Aorta (tissue), 5 donors: ENCODE measurements at regions of chr18 and their contacts with region 1.

Region 1: GRCh38 chr18:30532379-30532778 is 510.2 kb downstream of the DSC3 start:
- DNase-seq: no peak
- ATAC-seq: no peak
- H3K4me3 ChIP-seq: no peak overlapping the region
- H3K27ac ChIP-seq: no peak overlapping the region
- H3K4me1 ChIP-seq: no peaks in the 10 kb centered on the region
- H3K27me3 ChIP-seq: no peaks in the 10 kb centered on the region

Region 2: DNA sequence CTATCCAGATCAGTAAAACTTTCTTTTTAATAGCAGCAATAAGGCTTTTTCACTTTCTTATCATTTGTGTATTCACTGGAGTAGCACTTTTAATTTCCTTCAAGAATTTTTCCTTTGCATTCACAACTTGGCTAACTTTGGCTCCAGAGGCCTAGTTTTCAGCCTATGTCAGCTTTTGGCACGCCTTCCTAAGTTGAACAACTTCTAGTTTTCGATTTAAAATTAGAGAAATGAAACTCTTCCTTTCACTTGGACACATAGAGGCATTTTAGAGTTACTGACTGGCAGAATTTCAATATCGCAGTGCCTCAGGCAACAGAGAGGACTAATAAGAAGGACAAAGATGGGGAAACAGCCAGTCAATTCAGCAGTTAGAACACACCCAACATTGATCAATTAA is 67.3 kb before region 1 on chr18:
- intact Hi-C with region 1: loop called in 1 of 2 experiments (anchors 10 kb)
- DNase-seq: no peak
- ATAC-seq: no peak
- H3K4me3 ChIP-seq: no peak overlapping the region
- H3K27ac ChIP-seq: no peak overlapping the region
- H3K4me1 ChIP-seq: no peaks in the 10 kb centered on the region
- H3K27me3 ChIP-seq: no peaks in the 10 kb centered on the region